HEK293T (cell line): ENCODE measurements at regions of chr17 and their contacts with region 1.

Region 1: GRCh38 chr17:57046749-57047148 is 38.3 kb upstream of the AKAP1 start:
- DNase-seq: no peak

Region 2: DNA sequence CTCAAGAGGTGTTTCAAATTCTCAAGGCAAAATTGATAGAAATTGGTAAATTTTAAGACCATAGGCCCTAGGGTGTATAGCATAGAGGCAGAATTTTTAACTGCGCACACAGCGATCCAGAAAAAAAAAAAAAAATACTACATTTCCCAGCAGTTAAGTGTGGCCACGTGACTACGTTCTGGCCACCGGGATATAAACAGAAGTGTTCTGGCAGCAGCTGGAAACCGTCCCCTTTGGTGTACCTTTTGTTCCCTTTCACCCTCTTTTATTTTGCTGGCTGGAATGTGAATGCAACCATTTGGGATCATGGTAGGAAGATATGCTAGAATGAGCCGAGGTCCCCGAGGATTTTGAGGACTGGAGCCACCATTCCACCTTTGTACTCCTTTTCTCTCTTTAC is 14.4 kb before region 1 on chr17:
- CTCF ChIA-PET with region 1: interaction called, 10 read pairs
- POLR2A ChIA-PET with region 1: no interaction called
- DNase-seq: no peak